T-cell (primary cell): ENCODE measurements at regions of chr6 and their contacts with region 1.

Region 1: GRCh38 chr6:3414327-3415075 is 42.3 kb downstream of the SLC22A23 start:
- DNase-seq: peak in 21 of 35 experiments; percentile 3 to 31 (median 10)
- ATAC-seq: peak; percentile 38 to 77 (median 62)
- H3K4me3 ChIP-seq: no peak overlapping the region
- H3K4me3 Mint-ChIP-seq: no peak overlapping the region
- H3K27ac ChIP-seq: no peak overlapping the region
- H3K27ac Mint-ChIP-seq: peak overlapping the region in 1 of 2 donors; percentile 69
- H3K4me1 ChIP-seq: peaks cover 2 to 14% of the 10 kb centered on the region in 2 experiments
- H3K4me1 Mint-ChIP-seq: peaks cover 15 to 21% (median 19%) of the 10 kb centered on the region in 3 donors
- H3K27me3 ChIP-seq: no peaks in the 10 kb centered on the region
- H3K27me3 Mint-ChIP-seq: no peaks in the 10 kb centered on the region

Region 2: DNA sequence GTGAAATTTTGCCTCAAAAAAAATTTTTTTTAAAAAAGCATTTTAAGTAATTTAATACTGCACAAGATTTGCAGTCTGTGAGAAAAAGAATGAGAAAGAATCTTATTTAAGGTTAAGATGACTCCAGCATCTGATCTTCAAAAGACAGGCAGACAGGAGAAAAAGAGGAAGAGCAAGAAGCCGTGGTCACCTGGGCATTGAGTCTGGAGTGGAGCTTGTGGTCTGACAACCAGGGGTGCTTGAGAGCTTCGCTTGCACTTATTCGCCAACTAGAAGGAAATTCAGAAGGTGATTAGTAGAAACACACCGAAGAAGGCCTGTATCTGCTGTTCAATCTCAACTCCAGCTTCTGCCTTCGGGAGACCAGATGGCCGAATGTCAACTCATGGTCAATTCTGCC is 739.6 kb before region 1 on chr6:
- CTCF ChIA-PET with region 1: no interaction called
- POLR2A ChIA-PET with region 1: no interaction called
- DNase-seq: no peak
- ATAC-seq: no peak
- H3K4me3 ChIP-seq: no peak overlapping the region
- H3K4me3 Mint-ChIP-seq: no peak overlapping the region
- H3K27ac ChIP-seq: no peak overlapping the region
- H3K27ac Mint-ChIP-seq: no peak overlapping the region
- H3K4me1 ChIP-seq: no peaks in the 10 kb centered on the region
- H3K4me1 Mint-ChIP-seq: no peaks in the 10 kb centered on the region
- H3K27me3 ChIP-seq: no peaks in the 10 kb centered on the region
- H3K27me3 Mint-ChIP-seq: no peaks in the 10 kb centered on the region

Region 3: DNA sequence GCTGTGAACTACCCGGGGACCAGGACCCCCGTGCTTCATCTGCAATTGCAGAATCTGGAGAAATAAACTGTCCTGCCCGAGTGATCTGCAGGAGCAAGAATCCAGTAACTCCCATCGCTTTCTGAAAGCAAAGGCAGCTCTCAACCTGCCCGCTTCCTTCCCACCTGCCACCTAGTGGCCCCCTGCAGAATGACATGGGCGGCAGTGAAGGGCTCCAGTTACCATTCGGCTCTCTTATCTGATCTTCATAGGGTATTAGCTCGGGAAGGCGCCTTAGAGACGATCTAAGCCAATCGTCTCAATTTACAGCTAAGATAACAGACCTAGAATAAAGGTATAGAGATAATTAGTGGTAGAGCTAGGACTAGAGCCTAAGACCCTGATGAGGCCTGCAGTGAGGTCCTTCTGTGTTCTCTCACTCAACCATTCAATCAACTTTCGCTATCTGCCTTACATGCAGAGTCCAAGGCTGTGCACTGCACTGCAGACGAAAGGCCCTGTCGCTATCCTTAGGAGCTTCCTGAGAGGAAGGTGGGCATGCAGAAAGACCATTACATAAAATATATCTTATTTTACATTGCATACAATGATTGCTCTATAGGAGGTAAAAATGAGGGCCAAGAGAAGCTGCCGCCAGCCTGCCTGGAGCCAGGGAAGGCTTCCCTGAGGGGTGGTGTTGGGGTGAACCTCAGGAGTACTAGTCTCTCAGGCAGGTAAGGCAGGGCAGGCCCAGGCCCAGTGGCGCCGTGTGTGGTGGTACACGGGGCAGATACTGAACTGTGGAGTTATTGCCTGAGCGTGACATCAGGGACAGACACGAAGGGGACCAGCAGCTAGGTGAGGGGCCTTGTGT is 162.8 kb before region 1 on chr6:
- CTCF ChIA-PET with region 1: no interaction called
- POLR2A ChIA-PET with region 1: no interaction called
- DNase-seq: peak; percentile 49 to 86 (median 73)
- ATAC-seq: peak; percentile 92 to 96 (median 94)
- H3K4me3 ChIP-seq: no peak overlapping the region
- H3K4me3 Mint-ChIP-seq: peak overlapping the region in 1 of 3 donors; percentile 11
- H3K27ac ChIP-seq: no peak overlapping the region
- H3K27ac Mint-ChIP-seq: no peak overlapping the region
- H3K4me1 ChIP-seq: peaks cover 0 to 9% of the 10 kb centered on the region in 2 experiments
- H3K4me1 Mint-ChIP-seq: peaks cover 6 to 17% (median 6%) of the 10 kb centered on the region in 3 donors
- H3K27me3 ChIP-seq: peaks cover 0 to 50% of the 10 kb centered on the region in 2 experiments
- H3K27me3 Mint-ChIP-seq: peaks cover 11 to 39% of the 10 kb centered on the region in 2 donors

Region 4: DNA sequence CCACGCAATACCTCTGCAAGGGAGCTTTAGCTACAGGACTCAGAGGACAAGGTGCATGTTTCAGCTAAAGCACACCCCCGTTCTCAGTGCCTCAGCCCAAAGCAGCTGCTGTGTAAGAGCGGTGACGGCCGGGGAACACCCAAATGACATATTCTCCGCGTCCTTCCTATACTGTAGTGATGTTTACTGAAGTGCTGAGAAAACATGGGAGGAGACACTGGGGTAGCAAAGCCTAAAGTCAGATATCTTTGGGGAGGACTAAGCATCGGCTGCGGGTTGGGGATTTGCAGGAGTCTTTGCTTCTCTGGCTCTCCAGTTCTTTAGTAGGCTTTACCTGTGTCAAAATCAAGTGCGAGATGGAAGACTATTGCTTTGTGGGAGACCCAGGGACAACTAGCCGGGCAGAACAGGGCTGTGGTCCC is 40.7 kb after region 1 on chr6:
- CTCF ChIA-PET with region 1: interaction called, 5 to 7 read pairs
- POLR2A ChIA-PET with region 1: interaction called in 1 of 2 experiments, 10 read pairs
- DNase-seq: peak; percentile 8 to 81 (median 65)
- ATAC-seq: peak; percentile 35 to 87 (median 44)
- H3K4me3 ChIP-seq: peak overlapping the region; percentile 56 to 90
- H3K4me3 Mint-ChIP-seq: no peak overlapping the region
- H3K27ac ChIP-seq: no peak overlapping the region
- H3K27ac Mint-ChIP-seq: no peak overlapping the region
- H3K4me1 ChIP-seq: peaks cover 11 to 33% of the 10 kb centered on the region in 2 experiments
- H3K4me1 Mint-ChIP-seq: peaks cover 8 to 22% (median 14%) of the 10 kb centered on the region in 3 donors
- H3K27me3 ChIP-seq: peaks cover 4 to 37% of the 10 kb centered on the region in 2 experiments
- H3K27me3 Mint-ChIP-seq: peaks cover 7 to 18% of the 10 kb centered on the region in 2 donors